AG04450 (cell line): ENCODE measurements at regions of chr7 and their contacts with region 1.

Region 1: DNA sequence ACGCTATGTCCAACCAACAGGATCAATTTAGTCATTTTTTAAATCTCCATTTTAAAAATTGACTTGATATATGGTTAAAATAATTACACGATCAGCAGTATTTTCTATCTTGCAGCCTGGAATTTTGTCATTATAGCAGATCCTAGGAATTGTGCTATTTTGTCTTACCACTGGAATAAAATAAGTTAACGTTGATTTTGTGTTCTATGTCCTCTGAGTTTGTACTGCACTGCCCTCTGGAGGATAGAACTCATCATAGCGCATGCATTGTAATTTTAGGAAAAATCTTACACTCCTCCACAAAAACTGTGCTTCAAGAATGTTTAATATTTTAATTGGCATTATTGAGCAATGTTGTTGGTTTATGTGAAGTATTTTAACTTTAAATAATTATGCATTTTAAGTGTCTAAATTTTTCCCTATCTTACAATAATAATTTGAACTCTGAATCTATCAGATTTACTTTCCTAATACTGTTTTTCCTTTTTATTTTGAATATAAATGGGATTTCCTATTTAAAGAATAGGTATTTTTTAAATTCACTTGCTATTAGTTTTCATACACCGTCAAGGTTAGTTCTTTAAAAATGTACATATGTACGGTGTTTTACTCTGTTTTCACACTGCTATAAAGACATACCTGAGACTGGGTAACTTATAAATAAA is 220.1 kb downstream of the PPP1R3A start:
- DNase-seq: peak; percentile 4
- H3K4me3 ChIP-seq: no peak overlapping the region
- H3K27ac ChIP-seq: no peak overlapping the region
- H3K27me3 ChIP-seq: no peaks in the 10 kb centered on the region
- CTCF ChIP-seq: peak; percentile 86

Region 2: GRCh38 chr7:113582471-113582870 is 116.2 kb before region 1 on chr7:
- CTCF ChIA-PET with region 1: no interaction called
- POLR2A ChIA-PET with region 1: no interaction called
- DNase-seq: no peak
- H3K4me3 ChIP-seq: no peak overlapping the region
- H3K27ac ChIP-seq: no peak overlapping the region
- H3K27me3 ChIP-seq: no peaks in the 10 kb centered on the region
- CTCF ChIP-seq: no peak

Region 3: GRCh38 chr7:113610572-113610971 is 88.1 kb before region 1 on chr7:
- CTCF ChIA-PET with region 1: interaction called, 10 read pairs
- POLR2A ChIA-PET with region 1: no interaction called
- DNase-seq: no peak
- H3K4me3 ChIP-seq: no peak overlapping the region
- H3K27ac ChIP-seq: no peak overlapping the region
- H3K27me3 ChIP-seq: no peaks in the 10 kb centered on the region
- CTCF ChIP-seq: no peak

Region 4: GRCh38 chr7:113891828-113892227 is 193.1 kb after region 1 on chr7:
- CTCF ChIA-PET with region 1: no interaction called
- POLR2A ChIA-PET with region 1: no interaction called
- DNase-seq: peak; percentile 32
- H3K4me3 ChIP-seq: no peak overlapping the region
- H3K27ac ChIP-seq: no peak overlapping the region
- H3K27me3 ChIP-seq: no peaks in the 10 kb centered on the region
- CTCF ChIP-seq: no peak

Region 5: DNA sequence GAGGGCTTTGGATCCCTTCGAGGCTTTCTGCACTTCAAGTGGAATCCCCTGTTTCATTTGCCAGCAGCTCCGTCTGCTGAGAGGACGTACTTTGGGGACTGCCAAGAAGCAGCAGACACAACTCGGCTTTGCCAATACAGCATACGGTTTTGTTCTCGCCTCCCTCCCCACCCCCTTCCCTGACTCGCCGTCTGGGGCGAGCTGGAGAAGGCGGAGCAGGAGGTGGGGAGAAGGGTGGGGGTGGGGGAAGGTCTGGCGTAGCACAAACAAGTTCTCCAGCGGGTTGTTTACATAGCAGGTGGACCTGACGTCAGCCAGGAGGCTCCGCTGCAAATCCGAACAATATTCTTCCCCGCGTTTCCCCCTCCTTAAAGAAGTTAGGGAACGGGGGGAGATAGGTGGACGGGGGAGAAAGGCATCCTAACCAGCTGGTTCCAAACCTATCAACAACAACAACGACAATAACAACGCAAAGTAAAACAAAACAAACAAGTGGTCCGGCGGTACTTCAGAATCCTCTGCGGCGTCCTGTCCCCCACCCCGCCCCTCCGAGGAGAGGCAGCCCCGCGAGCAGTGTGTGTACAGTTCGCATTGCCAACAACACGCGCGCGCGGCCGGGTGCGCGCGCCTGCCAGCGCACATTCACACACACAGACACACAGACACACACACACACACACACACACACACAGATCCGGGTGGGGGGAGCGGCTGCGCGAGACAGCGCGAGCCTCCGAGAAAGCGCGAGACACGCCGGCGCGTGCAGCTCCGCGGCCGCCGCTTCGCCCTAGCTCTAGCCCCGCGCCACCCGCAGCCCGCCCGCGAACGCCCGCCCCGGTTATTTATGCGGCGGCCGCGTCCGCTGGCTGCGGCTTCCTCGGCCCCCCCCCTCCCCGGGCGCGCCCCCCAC is 387.2 kb after region 1 on chr7:
- CTCF ChIA-PET with region 1: no interaction called
- POLR2A ChIA-PET with region 1: no interaction called
- DNase-seq: peak; percentile 60
- H3K4me3 ChIP-seq: peak overlapping the region; percentile 79
- H3K27ac ChIP-seq: peak overlapping the region; percentile 31
- H3K27me3 ChIP-seq: peaks cover 29% of the 10 kb centered on the region
- CTCF ChIP-seq: no peak